ENCODE measurements at regions of chr6 and their contacts with region 1.

Region 1: DNA sequence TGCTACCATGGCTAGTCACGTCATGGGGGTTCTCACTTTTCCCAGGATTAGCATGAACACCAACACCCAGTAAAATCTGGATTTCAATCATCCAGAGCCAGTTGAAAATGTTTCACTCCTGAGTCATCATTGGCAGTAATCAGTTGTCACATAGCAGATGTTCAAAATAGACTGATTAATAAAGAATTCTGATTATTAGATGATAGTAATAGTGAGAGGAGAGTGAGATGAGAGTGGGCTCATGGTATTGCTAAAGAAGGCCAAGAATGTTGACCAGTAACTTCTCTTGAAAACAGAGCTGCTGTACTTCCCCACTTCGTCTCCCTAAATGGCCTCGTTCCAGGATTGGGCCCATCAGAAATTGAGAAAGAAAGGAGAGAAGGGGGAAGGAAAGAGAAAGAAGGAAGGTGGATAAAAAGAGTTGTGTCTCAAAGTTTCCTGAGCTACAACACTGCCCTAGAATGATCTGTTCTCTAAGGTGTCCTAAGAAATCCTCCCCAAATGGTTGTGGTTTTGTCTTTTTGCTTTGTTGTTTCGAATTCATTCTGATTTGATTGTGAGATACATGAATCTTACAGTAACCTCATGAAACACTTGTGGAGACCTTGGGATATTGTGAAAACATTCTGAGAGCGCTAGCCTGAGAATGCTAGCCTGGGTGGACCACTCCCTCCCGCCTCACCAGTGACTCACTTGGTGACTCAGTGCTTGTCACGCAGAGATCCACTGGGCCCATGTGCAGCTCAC is 502.2 kb upstream of the JARID2 start:
- DNase-seq: peak; percentile 92
- ATAC-seq: peak; percentile 84
- H3K4me3 Mint-ChIP-seq: peak overlapping the region; percentile 65
- H3K27ac Mint-ChIP-seq: peak overlapping the region; percentile 100
- H3K4me1 Mint-ChIP-seq: peaks cover 92% of the 10 kb centered on the region
- H3K27me3 Mint-ChIP-seq: no peaks in the 10 kb centered on the region

Region 2: DNA sequence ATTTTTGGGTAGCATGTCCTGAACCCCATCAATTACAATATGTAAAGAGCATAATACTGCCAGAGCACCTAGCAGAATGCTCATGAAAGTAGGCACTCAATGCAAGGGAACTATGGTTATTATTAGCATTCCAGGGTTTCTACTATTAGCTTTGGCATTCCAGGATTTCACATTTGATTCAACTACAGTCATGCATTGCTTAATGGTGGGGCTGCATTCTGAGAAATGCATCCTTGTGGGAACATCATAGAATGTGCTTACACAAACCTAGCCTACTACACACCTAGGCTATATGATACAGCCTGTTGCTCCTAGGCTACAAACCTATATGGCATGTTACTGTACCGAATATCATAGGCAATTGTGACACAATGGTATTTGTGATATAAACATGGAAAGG is 378.2 kb before region 1 on chr6:
- CTCF ChIA-PET with region 1: no interaction called
- POLR2A ChIA-PET with region 1: interaction called, 12 read pairs
- intact Hi-C with region 1: no loop called
- DNase-seq: no peak
- ATAC-seq: no peak
- H3K4me3 Mint-ChIP-seq: no peak overlapping the region
- H3K27ac Mint-ChIP-seq: no peak overlapping the region
- H3K4me1 Mint-ChIP-seq: peaks cover 5% of the 10 kb centered on the region
- H3K27me3 Mint-ChIP-seq: no peaks in the 10 kb centered on the region

Region 3: DNA sequence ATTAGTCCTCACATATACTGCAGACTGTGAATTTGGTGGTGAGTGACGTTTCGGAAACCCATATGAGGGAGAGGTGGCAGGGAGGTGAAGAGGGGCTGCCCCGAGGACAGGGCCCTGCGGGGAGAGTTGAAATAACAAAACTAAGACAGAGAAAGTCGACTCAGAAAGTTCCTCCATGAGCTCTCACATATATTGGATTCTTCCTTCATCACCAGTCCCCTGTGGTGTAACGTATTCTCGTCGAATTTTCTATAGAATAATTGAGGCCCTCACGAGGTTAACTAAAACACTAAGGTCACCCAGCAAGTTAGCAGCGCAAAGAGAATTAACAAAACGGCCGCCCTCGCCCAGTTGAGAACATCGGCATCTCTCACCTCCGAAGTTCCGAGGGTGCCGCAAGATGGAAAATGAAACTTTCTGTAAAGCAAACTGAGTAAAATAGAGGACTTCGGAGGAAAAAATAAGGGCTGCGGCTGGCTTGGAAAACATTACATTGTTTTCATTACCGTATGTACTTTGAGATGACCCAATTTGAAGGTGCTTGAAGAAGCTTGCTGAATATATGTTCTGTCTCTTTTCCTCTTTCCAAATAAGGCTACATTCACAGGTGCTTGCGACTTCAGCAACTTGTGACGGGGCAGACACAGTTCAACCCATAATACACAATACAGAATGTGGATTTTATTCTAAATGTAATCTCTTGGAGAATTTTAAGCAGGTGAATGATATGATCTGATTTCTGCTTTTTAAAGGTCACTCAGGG is 11.3 kb after region 1 on chr6:
- CTCF ChIA-PET with region 1: interaction called, 3 read pairs
- POLR2A ChIA-PET with region 1: interaction called, 10 read pairs
- intact Hi-C with region 1: no loop called
- DNase-seq: peak; percentile 82
- ATAC-seq: peak; percentile 81
- H3K4me3 Mint-ChIP-seq: peak overlapping the region; percentile 40
- H3K27ac Mint-ChIP-seq: peak overlapping the region; percentile 96
- H3K4me1 Mint-ChIP-seq: peaks cover 60% of the 10 kb centered on the region
- H3K27me3 Mint-ChIP-seq: no peaks in the 10 kb centered on the region

Region 4: DNA sequence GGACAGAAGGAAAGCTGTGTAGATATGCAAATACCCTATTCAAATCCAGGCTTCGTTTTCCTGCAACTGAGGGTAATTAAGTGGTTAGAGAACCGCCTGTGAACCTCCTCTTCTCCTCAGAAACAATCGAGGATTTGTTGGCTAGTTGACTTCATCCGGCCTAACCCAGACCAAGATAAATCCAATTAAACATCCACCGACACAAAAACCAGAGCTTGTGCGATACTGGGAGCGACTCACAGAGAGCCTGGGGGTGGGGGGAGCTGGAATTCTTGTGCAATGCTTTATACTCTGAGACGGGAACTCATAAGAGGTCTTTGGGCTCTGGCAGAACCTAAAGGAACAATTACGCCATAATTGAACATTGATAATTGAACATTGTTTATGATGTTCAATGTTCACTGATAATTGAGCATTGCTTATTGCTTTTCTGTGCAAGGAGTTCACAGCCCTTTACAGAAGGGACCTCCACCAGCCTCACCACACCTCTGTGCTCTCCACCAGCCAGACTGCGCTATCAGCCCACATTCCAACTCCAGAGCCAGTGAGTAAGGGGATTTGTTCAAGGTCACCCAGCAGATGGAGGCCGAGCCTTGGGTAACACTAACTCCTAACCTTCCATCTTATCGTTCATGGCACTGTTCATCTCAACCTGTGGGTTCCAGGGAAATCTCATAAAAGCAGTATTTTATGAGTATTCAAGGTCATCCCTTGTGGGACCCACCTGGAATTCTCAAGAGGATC is 72.7 kb after region 1 on chr6:
- CTCF ChIA-PET with region 1: no interaction called
- POLR2A ChIA-PET with region 1: no interaction called
- intact Hi-C with region 1: loop called in 1 of 2 experiments (anchors 2 kb)
- DNase-seq: no peak
- ATAC-seq: no peak
- H3K4me3 Mint-ChIP-seq: no peak overlapping the region
- H3K27ac Mint-ChIP-seq: no peak overlapping the region
- H3K4me1 Mint-ChIP-seq: peaks cover 18% of the 10 kb centered on the region
- H3K27me3 Mint-ChIP-seq: no peaks in the 10 kb centered on the region

Region 5: DNA sequence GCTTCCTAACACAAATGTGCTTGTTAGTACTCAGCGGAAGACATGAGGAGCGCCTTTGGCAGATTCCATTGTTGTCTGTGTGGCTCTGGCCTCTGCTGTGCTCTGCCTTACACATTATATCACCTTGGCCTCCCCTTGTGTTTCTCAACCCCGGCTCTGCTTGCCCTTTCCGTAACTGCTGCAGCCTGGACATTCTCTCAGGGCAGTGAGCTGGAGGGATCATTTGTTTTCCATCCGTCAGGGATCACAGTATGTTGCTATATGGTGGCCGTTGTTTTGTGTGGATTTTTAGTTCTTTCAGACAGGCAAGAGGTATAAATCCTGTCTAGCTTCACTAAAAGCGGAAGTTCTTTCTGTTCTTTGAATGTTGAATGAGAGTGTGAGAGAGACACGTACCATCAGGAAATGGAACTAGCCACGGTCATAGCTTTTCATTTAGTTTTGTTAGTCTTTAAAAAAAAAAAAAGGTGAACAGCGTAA is 677.4 kb after region 1 on chr6:
- CTCF ChIA-PET with region 1: no interaction called
- POLR2A ChIA-PET with region 1: no interaction called
- intact Hi-C with region 1: loop called in 1 of 2 experiments (anchors 5 kb)
- DNase-seq: no peak
- ATAC-seq: peak; percentile 27
- H3K4me3 Mint-ChIP-seq: peak overlapping the region; percentile 53
- H3K27ac Mint-ChIP-seq: peak overlapping the region; percentile 81
- H3K4me1 Mint-ChIP-seq: peaks cover 70% of the 10 kb centered on the region
- H3K27me3 Mint-ChIP-seq: no peaks in the 10 kb centered on the region

Region 6: GRCh38 chr6:15621203-15622044 is 877.8 kb after region 1 on chr6:
- CTCF ChIA-PET with region 1: no interaction called
- POLR2A ChIA-PET with region 1: no interaction called
- intact Hi-C with region 1: loop called in 1 of 2 experiments (anchors 10 kb)
- DNase-seq: peak; percentile 45
- ATAC-seq: peak; percentile 93
- H3K4me3 Mint-ChIP-seq: no peak overlapping the region
- H3K27ac Mint-ChIP-seq: peak overlapping the region; percentile 6
- H3K4me1 Mint-ChIP-seq: peaks cover 32% of the 10 kb centered on the region
- H3K27me3 Mint-ChIP-seq: peaks cover 2% of the 10 kb centered on the region

Measured in activated CD4-positive, alpha-beta T cell treated with anti-CD3 and anti-CD28 coated beads for 36 hours (primary cell).